ENCODE measurements at regions of chr10 and their contacts with region 1.

Region 1: GRCh38 chr10:101067356-101068083 is 5.7 kb downstream of the KAZALD1 start:
- DNase-seq: peak; percentile 71 to 75 (median 73)
- ATAC-seq: peak in 3 of 4 donors; percentile 36 to 55 (median 52)
- H3K4me3 ChIP-seq: peak overlapping the region; percentile 37 to 66 (median 57)
- H3K27ac ChIP-seq: peak overlapping the region in 11 of 12 donors; percentile 1 to 99 (median 85)
- H3K4me1 ChIP-seq: peaks cover 0 to 70% (median 38%) of the 10 kb centered on the region in 12 donors
- H3K27me3 ChIP-seq: peaks cover 0 to 34% (median 8%) of the 10 kb centered on the region in 9 donors
- CTCF ChIP-seq: peak; percentile 86 to 95 (median 92)
- POLR2A ChIP-seq: no peak

Region 2: DNA sequence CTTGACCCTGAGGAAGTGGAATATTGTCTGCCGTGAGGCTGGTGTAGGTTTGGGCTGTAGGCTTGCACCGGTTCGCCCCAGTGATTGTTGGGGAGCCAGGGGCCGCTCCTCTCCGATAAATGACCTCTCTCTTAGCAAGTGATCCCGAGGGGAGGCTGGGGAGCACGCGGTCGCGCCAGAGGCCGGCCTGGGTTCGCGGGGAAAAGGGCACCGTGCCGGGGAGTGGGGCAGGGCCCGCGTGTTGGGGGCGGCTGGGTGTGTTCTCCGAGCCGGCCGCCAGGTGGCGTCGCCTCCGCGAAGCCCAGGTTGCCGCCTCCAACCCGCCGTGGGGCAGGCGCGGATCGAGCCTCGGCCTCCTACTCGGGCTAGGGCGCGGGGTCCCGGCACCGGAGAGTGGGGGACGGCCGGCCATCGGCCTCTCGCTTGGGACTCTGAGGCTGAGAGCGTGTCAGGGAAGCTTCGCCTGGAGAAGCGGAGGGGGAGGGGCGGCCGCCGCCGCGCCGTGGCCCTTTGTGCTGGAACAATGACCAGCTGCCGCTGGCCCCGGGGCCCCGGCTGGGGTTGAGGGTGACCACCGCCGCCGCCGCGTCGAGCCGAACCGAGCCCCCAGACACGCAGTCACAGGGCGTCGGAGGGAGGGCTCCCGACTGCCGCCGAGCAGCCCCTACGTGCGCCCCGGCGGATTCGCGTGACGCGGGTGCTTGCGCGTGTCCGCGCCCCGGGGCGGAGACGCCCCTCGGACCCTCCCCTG is 68.4 kb before region 1 on chr10:
- intact Hi-C with region 1: loop called in 4 of 10 experiments (anchors 5 to 10 kb)
- DNase-seq: peak; percentile 87 to 93 (median 89)
- ATAC-seq: peak; percentile 17 to 75 (median 62)
- H3K4me3 ChIP-seq: peak overlapping the region; percentile 62 to 99 (median 89)
- H3K27ac ChIP-seq: peak overlapping the region; percentile 93 to 100 (median 100)
- H3K4me1 ChIP-seq: peaks cover 8 to 66% (median 49%) of the 10 kb centered on the region in 12 donors
- H3K27me3 ChIP-seq: no peaks in the 10 kb centered on the region
- CTCF ChIP-seq: peak; percentile 92 to 99 (median 97)
- POLR2A ChIP-seq: peak; percentile 60 to 96

Region 3: DNA sequence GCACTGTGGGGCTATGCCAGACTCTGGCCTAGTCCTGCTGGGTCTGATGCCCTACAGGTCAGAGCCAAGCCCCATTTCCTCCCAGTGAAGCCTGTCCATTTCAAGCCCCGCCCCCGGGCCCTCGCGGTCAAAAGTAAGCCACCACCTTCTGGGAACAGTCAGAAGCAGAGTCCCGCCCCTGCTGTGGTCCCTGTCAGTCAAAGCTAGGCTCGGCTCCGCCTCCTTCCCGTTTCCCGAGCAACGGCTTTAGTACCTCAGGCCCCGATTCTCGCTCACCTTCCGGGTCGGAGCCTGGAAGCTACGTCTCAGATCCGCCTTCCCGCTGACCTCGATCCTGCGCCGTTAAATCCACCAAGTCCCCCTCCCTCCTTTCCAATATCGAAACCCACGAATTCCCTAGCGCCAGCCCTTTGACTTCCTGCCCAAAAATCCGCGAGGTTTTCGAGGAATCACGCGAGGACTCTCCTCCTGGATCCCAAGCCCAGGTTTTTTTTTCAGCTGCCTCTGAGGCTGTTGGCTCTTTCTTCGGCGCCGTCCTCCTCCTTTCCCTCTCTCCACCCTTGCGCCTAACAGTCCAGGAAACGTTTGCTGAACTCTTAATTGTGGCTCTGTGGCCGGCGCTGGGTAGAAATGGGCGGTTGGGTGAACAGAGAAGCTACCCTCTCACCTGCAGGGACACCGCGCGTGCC is 24.7 kb before region 1 on chr10:
- intact Hi-C with region 1: loop called in 6 of 10 experiments (anchors 2 kb)
- DNase-seq: peak; percentile 96 to 98 (median 96)
- ATAC-seq: peak; percentile 89 to 96 (median 94)
- H3K4me3 ChIP-seq: peak overlapping the region; percentile 9 to 79 (median 56)
- H3K27ac ChIP-seq: peak overlapping the region; percentile 26 to 91 (median 85)
- H3K4me1 ChIP-seq: peaks cover 0 to 24% (median 17%) of the 10 kb centered on the region in 12 donors
- H3K27me3 ChIP-seq: peaks cover 3 to 17% (median 12%) of the 10 kb centered on the region in 9 donors
- CTCF ChIP-seq: no peak
- POLR2A ChIP-seq: peak in 1 of 2 donors; percentile 61

Region 4: DNA sequence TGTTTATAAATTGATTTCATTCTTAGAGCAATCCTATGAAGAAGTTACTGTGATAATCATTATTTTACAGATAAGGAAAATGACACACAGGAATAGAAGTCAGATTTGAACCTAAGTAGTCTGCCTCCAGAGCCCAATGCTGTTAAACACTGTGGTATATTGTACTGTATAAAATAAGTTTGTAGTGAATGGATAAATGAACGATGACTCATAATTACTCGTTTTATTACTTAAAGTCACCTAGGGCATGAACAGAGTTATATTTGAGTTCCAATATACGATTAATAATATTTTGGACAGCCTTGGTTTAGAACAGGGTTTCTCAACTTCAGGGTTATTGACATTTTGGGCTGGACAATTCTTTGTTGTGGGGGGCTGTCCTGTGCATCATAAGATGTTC is 278.7 kb after region 1 on chr10:
- intact Hi-C with region 1: no loop called
- DNase-seq: no peak
- ATAC-seq: no peak
- H3K4me3 ChIP-seq: no peak overlapping the region
- H3K27ac ChIP-seq: no peak overlapping the region
- H3K4me1 ChIP-seq: no peaks in the 10 kb centered on the region
- H3K27me3 ChIP-seq: peaks cover 0 to 7% (median 0%) of the 10 kb centered on the region in 9 donors
- CTCF ChIP-seq: no peak
- POLR2A ChIP-seq: no peak